ENCODE measurements at regions of chr17 and their contacts with region 1.

Region 1: GRCh38 chr17:47708863-47709541 is 15.0 kb downstream of the TBKBP1 start:
- H3K4me3 ChIP-seq: no peak overlapping the region
- H3K27ac ChIP-seq: no peak overlapping the region
- H3K4me1 ChIP-seq: no peaks in the 10 kb centered on the region
- CTCF ChIP-seq: no peak

Region 2: GRCh38 chr17:47654991-47655390 is 54.0 kb before region 1 on chr17:
- CTCF ChIA-PET with region 1: no interaction called
- POLR2A ChIA-PET with region 1: interaction called, 10 read pairs
- H3K4me3 ChIP-seq: no peak overlapping the region
- H3K27ac ChIP-seq: no peak overlapping the region
- H3K4me1 ChIP-seq: peaks cover 8% of the 10 kb centered on the region
- CTCF ChIP-seq: no peak

Measured in HEK293 (cell line).